ENCODE measurements at regions of chr15 and their contacts with region 1.

Region 1: GRCh38 chr15:52078876-52079700 is 33.5 kb downstream of the BCL2L10 start:
- DNase-seq: peak; percentile 80
- CTCF ChIP-seq: peak; percentile 75

Region 2: GRCh38 chr15:51750792-51751685 is 328.0 kb before region 1 on chr15 and contains the start of gene TMOD2:
- CTCF ChIA-PET with region 1: no interaction called
- POLR2A ChIA-PET with region 1: no interaction called
- DNase-seq: peak; percentile 76
- CTCF ChIP-seq: no peak

Region 3: DNA sequence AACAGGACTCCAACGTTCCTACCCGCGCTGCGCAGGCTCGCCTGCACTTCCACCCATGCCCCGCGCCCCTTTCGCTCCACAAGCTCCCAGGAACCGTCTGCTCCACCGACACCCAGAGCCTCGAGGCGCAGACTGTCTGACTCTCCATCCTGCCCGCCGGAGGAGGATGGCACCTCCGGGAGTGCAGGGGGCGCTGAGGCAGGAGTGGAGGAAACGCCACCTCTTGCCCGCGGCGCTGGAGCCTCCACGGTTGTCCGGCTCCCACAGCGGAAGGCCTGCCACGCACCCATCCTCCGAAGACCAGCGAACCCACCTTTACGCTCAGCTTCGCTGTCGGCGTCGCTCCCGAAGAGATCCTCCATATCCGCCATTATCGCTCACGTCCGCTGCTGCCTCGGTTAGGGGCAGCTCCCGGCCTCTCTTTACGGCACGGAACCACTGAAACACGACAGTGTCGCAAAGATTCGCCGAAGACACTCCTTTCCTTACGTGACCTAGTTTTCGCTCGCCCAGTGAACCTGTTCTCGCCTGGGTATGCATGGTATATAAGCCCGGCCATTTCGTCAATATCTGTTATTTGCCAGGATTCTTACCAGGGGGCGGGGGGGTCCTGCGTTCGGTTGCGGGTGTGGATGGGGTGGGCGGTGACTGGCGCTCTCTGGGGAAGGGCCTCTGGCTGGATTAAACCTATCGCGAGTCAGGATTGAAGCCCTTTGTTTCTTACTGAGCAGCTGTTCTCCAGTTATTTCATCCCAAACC is 107.5 kb before region 1 on chr15 and contains the start of gene LEO1:
- CTCF ChIA-PET with region 1: interaction called, 23 read pairs
- POLR2A ChIA-PET with region 1: no interaction called
- DNase-seq: peak; percentile 95
- CTCF ChIP-seq: peak; percentile 29

Region 4: GRCh38 chr15:52019388-52020220 is 59.5 kb before region 1 on chr15:
- CTCF ChIA-PET with region 1: interaction called, 10 read pairs
- POLR2A ChIA-PET with region 1: no interaction called
- DNase-seq: peak; percentile 73
- CTCF ChIP-seq: no peak

Region 5: GRCh38 chr15:52039925-52040781 is 38.9 kb before region 1 on chr15:
- CTCF ChIA-PET with region 1: interaction called, 12 read pairs
- POLR2A ChIA-PET with region 1: no interaction called
- DNase-seq: no peak
- CTCF ChIP-seq: no peak

Region 6: GRCh38 chr15:52103217-52104207 is 24.4 kb after region 1 on chr15:
- CTCF ChIA-PET with region 1: interaction called, 46 read pairs
- POLR2A ChIA-PET with region 1: interaction called, 3 read pairs
- DNase-seq: peak; percentile 77
- CTCF ChIP-seq: no peak

Region 7: DNA sequence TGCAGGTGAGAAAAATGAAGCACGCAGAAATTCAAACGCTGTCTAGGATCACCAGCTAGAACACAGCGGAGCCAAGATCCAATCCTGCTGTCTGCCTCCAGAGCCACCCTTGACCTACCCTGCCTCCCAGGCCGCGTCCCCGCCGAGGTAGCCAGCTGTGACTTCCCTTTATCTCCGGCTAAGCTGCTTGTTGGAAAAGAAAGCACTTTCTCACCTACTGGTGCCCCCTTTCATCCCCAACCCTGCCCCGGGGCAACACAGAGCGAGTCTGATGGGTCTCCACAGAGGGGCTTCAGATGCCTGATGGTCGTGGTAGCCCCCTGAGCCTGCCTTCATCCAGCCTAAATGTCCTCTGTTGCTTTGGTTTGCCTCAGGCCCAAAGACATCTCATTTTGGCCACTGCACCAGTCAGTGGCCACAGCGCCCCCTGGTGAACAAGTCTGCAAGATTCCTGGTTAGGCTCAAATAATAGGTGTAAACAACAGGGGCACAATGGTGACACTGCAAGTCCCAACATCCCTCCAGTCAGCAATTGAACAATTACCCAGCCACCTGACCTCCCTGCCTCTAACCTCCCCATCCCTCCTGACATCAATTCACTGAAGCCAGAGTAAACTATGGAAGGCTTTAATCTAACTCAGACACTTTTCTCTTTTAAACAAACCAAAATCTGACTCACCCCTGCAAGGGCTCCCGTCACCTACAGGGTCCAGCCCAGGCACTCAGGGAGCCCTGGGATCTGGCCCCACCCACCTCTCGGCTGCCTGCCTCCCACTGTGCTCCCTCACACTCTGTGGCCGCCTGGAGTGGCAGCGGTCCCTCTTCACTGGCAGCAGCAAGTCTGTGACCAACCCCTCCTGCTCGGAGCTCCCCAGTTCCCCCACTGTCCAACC is 60.8 kb after region 1 on chr15:
- CTCF ChIA-PET with region 1: interaction called, 57 read pairs
- POLR2A ChIA-PET with region 1: no interaction called
- DNase-seq: peak; percentile 86
- CTCF ChIP-seq: peak; percentile 87